Activated naive CD4-positive, alpha-beta T cell treated with anti-CD3 and anti-CD28 coated beads, Interleukin-2, amount 10 ng/mL, durations not matched to agents 7 days and 5 days (primary cell): ENCODE measurements at regions of chr2 and their contacts with region 1.

Region 1: GRCh38 chr2:9813312-9814133 is 29.8 kb upstream of the TAF1B start:
- DNase-seq: peak; percentile 78
- H3K4me3 Mint-ChIP-seq: no peak overlapping the region
- H3K27ac Mint-ChIP-seq: no peak overlapping the region
- H3K4me1 Mint-ChIP-seq: peaks cover 29% of the 10 kb centered on the region
- H3K27me3 Mint-ChIP-seq: peaks cover 65% of the 10 kb centered on the region

Region 2: DNA sequence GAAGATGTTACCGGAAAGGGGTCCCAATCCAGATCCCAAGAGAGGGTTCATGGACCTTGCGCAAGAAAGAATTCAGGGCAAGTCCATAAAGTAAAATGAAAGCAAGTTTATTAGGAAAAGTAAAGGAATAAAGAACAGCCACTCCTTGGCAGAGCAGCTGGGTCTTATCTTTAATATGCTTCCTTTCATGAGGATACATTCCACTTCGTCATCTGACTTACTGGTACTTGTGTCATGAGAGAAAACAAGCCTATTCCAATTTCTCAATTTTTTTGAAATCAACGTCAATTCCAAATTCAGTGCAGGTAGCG is 1192.5 kb before region 1 on chr2:
- CTCF ChIA-PET with region 1: no interaction called
- DNase-seq: no peak
- H3K4me3 Mint-ChIP-seq: no peak overlapping the region
- H3K27ac Mint-ChIP-seq: no peak overlapping the region
- H3K4me1 Mint-ChIP-seq: no peaks in the 10 kb centered on the region
- H3K27me3 Mint-ChIP-seq: peaks cover 52% of the 10 kb centered on the region

Region 3: DNA sequence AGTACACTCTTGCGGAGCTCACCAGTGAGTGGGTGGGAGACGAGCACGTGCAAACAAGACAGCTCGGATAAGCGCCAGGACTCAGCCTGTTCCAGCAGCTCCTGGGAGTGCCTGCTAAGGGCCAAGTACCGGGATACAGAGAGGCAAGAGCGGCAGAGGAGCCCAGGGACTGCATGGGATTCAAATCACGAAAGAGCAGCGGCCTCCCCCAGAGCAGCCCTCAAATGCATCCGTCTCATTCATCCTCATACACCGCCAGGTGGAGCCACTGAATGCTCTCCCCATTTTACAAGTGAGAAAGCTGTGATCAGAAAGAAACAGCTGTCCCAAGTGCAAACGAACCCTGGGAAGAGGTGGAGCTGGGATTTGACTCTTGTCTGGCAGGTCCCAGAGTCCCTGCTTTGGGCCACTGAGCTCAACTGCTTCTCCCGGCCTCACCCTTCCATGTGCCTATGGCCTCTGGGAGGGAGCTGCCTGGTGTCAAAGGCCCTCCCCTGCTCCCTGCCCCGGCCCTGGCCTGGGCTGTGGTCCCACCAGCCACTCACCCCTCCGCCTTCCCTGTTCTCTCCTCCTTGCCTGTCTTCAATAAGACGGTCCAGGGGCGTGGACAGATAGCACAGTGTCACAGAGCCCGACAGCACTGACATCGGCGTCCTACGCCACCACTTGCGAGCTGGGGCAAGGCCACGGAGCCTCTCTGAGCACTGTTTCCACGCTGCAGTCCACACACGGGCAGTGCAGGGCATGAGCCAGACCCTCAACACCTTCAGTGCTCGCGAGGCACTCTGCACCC is 43.0 kb before region 1 on chr2:
- CTCF ChIA-PET with region 1: interaction called, 11 read pairs
- DNase-seq: peak; percentile 73
- H3K4me3 Mint-ChIP-seq: no peak overlapping the region
- H3K27ac Mint-ChIP-seq: peak overlapping the region; percentile 24
- H3K4me1 Mint-ChIP-seq: peaks cover 8% of the 10 kb centered on the region
- H3K27me3 Mint-ChIP-seq: peaks cover 67% of the 10 kb centered on the region

Region 4: GRCh38 chr2:9830690-9831410 is 17.3 kb after region 1 on chr2:
- CTCF ChIA-PET with region 1: interaction called, 12 read pairs
- DNase-seq: no peak
- H3K4me3 Mint-ChIP-seq: no peak overlapping the region
- H3K27ac Mint-ChIP-seq: no peak overlapping the region
- H3K4me1 Mint-ChIP-seq: peaks cover 13% of the 10 kb centered on the region
- H3K27me3 Mint-ChIP-seq: peaks cover 47% of the 10 kb centered on the region

Region 5: DNA sequence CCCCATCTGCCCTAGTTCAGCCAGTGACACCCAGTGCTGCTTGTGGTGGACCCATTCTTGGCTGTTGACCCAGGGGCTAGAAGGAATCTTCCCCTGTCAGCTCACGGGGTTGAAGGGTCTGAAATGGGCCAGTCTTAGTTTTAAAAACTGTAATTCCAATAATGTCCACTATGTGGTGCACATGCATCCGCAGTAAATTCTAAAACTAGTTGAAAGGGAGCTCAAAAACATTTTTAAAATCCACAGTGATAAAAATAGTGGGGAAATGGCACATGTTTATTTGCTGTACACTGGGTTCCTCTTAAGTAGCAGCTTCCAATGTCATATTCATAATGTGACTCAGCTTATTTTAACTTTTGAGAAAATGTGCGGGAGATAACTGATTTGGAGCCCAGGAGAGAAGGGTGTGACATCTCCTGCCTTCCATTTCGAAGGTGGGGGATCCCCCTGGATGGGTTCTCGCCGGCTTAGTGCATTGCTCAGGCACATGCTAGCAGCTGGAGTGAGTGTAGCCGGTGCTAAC is 170.8 kb after region 1 on chr2:
- CTCF ChIA-PET with region 1: interaction called, 19 read pairs
- DNase-seq: no peak
- H3K4me3 Mint-ChIP-seq: no peak overlapping the region
- H3K27ac Mint-ChIP-seq: no peak overlapping the region
- H3K4me1 Mint-ChIP-seq: peaks cover 14% of the 10 kb centered on the region
- H3K27me3 Mint-ChIP-seq: peaks cover 40% of the 10 kb centered on the region

Region 6: DNA sequence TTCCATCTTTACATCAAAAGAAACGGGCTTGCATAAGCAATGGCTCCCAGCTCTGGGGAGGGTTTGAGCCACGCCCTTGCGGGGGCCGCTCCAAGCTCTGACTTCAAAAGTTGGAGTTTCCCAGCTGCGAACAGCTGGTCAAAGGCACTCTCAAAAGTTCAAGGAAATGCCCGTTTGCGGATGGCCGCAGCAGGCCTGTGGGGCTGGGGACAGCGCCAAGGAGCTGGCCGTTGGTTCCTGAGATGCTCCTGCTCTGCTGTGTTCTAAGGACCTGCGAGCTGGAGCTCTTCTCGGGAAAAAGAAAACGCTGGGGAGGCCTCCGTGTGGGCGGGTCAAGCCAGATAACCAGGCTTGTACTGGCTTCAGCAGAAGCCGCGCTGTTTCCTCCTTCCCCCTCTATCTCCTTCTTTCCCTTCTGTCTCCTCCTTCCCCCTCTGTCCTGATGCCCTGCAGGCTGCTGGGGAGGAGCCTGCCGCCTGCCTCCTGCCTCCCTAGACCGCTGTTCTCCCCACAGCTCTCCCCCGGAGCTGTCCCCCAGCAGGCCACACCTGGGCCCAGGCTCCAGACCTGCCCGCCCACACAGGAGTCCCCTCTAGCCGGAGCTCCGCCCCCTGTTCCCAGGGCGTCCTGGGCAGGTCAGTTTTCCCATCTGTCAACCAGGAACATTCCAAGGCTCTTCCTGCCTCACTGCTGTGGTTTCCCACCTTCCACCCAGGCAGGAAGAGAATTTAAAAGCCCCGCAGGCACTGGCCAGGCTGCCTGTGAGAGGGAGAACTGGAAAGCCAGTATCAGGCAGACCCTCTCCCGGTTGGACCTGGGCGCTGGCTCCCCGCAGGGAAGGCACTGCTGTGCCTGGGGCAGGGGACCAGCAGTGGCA is 243.9 kb after region 1 on chr2:
- CTCF ChIA-PET with region 1: interaction called, 110 read pairs
- DNase-seq: no peak
- H3K4me3 Mint-ChIP-seq: no peak overlapping the region
- H3K27ac Mint-ChIP-seq: no peak overlapping the region
- H3K4me1 Mint-ChIP-seq: peaks cover 6% of the 10 kb centered on the region
- H3K27me3 Mint-ChIP-seq: peaks cover 60% of the 10 kb centered on the region